A549 (cell line): ENCODE measurements at regions of chr21 and their contacts with region 1.

Region 1: DNA sequence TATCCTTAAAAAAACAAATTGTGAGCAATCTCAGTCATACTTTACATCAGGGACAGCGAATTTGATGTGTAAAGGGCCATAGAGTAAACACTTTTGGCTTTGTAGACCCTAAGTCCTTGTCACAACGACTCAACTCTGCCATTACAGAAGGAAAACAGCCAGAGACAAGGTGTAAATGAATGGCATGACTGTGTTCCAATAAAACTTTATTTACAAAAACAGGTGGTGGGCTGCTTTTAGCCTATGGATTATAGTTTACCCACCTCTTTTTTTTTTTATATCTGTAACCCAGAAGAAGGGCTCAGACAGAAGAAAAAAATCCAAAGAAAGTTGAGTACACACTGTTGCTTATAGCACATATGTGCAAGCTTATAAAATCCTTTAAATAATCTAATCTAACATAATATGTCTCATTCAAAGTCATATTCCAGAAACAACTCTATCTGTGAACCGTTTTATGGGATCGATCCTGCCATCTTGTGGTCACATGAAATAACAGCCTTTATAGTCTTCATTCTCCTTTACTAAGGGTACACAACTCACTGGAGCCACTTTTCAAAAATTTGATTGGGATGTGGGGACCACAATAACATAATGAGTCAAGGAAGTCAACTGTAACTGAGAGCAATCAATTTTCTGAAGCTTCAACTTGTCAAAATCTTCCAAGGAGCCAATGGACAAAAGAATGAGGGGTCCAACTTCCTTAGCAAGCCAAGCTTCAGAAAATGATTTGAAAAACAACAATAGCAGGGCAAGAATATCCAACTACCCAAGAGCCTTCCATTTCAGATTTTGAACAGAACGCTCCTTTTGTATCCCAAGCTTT is 142.2 kb upstream of the KRTAP19-8 start:
- DNase-seq: peak; percentile 9 to 23
- ATAC-seq: peak; percentile 61 to 73; a peak in 2 of 6 replicates
- H3K4me3 ChIP-seq: no peak overlapping the region
- H3K27ac ChIP-seq: no peak overlapping the region
- H3K4me1 ChIP-seq: no peaks in the 10 kb centered on the region
- CTCF ChIP-seq: peak; percentile 27; the same call in 2 of the 3 replicates
- EP300 ChIP-seq: no peak
- POLR2A ChIP-seq: no peak
- RAD21 ChIP-seq: peak; percentile 14 to 24; a peak in 1 of 5 replicates

Region 2: DNA sequence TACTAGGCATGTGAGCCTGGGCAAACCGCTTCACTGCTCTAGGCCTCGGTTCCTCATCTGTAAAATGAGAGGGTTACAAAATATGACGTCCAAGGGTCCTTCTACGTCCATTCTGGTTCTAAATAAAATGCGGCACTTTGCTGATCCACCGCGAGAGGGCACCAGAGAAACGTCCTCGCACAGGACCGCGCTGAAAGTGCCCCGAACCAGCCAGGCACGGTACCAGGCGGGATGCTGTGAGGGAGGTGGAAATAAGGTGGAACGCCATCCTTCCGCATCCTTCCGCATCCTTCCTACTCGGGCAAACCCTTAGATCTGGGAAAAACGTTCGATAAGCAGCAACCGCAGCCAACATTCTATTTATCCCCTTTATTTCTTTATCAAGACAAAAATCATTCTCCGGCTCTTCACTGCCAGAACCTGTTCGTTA is 81.9 kb before region 1 on chr21:
- CTCF ChIA-PET with region 1: interaction called, 74 read pairs
- POLR2A ChIA-PET with region 1: no interaction called
- DNase-seq: peak in 1 of 2 experiments; percentile 44
- ATAC-seq: peak; percentile 73 to 86; a peak in 5 of 6 replicates
- H3K4me3 ChIP-seq: no peak overlapping the region
- H3K27ac ChIP-seq: no peak overlapping the region
- H3K4me1 ChIP-seq: no peaks in the 10 kb centered on the region
- CTCF ChIP-seq: peak; percentile 55
- EP300 ChIP-seq: no peak
- POLR2A ChIP-seq: no peak
- RAD21 ChIP-seq: peak; percentile 61 to 66

Region 3: GRCh38 chr21:31107871-31108270 is 72.6 kb before region 1 on chr21:
- CTCF ChIA-PET with region 1: interaction called, 74 read pairs
- POLR2A ChIA-PET with region 1: no interaction called
- DNase-seq: no peak
- ATAC-seq: no peak
- H3K4me3 ChIP-seq: no peak overlapping the region
- H3K27ac ChIP-seq: no peak overlapping the region
- H3K4me1 ChIP-seq: no peaks in the 10 kb centered on the region
- CTCF ChIP-seq: no peak
- EP300 ChIP-seq: no peak
- POLR2A ChIP-seq: no peak
- RAD21 ChIP-seq: no peak

Region 4: GRCh38 chr21:31117128-31117916 is 63.1 kb before region 1 on chr21:
- CTCF ChIA-PET with region 1: interaction called, 12 read pairs
- POLR2A ChIA-PET with region 1: no interaction called
- DNase-seq: peak in 1 of 2 experiments; percentile 9
- ATAC-seq: no peak
- H3K4me3 ChIP-seq: no peak overlapping the region
- H3K27ac ChIP-seq: no peak overlapping the region
- H3K4me1 ChIP-seq: no peaks in the 10 kb centered on the region
- CTCF ChIP-seq: no peak
- EP300 ChIP-seq: no peak
- POLR2A ChIP-seq: no peak
- RAD21 ChIP-seq: no peak

Region 5: DNA sequence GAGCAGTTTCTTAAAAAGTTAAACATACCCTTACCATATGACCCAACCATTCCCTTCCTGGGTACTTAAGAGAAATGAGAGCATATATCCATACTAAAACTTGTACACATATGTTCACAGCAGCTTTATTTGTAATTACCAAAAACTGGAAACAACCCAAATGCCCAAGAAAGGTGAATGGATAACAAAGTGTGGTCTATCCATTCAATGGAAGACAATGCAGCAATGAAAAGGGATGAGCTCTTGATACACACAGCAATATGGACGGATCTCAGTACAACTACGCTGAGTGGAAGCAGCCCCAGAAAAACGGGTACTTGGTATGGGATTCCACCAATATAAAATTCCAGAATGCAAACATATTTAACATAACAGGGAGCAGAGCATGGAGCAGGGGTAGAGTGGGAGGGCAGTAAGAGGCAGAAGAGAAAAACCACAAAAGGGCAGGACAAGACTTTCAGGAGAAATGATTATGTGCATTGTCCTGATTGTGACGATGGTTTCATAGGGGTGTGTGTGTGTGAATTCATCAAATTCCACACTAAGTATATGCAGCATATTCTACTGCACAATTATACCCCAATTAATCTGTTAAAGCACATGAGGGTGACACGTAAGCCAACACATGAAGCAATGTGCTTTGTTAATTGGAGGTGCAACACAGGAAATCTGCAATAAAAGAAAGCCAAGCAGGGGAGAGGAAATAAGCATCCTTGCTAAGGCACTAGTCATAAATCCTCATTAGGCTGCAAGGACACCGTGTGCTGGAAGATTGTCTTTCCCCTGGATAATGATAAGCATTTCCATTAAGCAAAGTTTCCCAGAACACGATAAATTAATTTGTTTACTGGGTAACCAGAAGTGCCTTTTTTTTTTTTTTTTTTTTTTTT is 29.1 kb before region 1 on chr21:
- CTCF ChIA-PET with region 1: no interaction called
- POLR2A ChIA-PET with region 1: no interaction called
- DNase-seq: no peak
- ATAC-seq: no peak
- H3K4me3 ChIP-seq: no peak overlapping the region
- H3K27ac ChIP-seq: no peak overlapping the region
- H3K4me1 ChIP-seq: no peaks in the 10 kb centered on the region
- CTCF ChIP-seq: no peak
- EP300 ChIP-seq: no peak
- POLR2A ChIP-seq: no peak
- RAD21 ChIP-seq: no peak